ENCODE measurements at regions of chr6 and their contacts with region 1.

Region 1: GRCh38 chr6:89527634-89528033 is 94.7 kb downstream of the ANKRD6 start:
- DNase-seq: no peak
- ATAC-seq: peak; percentile 60
- H3K4me3 ChIP-seq: no peak overlapping the region
- H3K4me3 Mint-ChIP-seq: no peak overlapping the region
- H3K27ac ChIP-seq: no peak overlapping the region
- H3K27ac Mint-ChIP-seq: peak overlapping the region in 1 of 9 donors; percentile 24
- H3K4me1 ChIP-seq: no peaks in the 10 kb centered on the region
- H3K4me1 Mint-ChIP-seq: peaks cover 0 to 3% (median 0%) of the 10 kb centered on the region in 7 donors
- H3K27me3 ChIP-seq: no peaks in the 10 kb centered on the region
- H3K27me3 Mint-ChIP-seq: no peaks in the 10 kb centered on the region

Region 2: DNA sequence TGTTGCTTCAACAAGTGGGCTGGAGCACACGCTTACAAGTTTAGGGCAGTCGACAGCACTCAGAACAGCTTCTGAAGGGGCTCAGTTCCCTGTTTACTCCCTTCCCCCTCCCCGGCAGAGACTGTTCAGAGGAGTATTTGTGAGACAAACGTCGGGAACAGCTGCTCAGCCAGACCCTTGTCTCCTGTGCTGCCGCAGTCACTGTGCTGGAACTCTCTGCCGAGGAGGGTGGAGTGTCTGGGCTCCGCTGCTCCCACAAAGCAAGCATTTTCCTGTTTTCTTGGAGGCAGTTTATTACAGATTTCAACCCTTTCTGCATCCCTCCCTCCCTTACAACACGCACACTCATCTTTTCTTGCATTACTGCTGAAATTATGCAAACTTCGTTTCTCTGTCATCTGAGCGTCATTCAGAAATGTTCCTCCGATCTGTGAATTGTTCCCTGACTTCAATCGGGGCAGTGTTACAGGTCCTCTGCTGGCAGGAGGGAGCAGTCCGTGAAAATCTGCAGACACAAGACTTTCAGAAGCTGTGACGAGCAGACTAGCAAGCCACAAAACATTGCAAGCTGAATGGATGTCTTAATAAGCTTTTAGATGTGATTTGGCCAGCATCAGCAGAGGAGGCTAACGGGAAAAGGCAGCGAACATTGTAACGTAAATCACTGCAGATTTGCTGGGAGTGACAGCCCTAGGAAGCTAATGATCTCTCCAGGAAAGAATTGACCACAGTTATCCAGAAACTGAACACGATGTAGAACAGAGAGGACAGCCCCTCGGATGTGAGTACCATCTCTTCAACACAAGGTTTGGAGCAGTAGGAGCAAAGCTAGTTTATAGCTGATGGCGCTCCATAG is 34.7 kb after region 1 on chr6:
- CTCF ChIA-PET with region 1: no interaction called
- POLR2A ChIA-PET with region 1: no interaction called
- intact Hi-C with region 1: loop called in 1 of 2 experiments (anchors 1 kb)
- DNase-seq: no peak
- ATAC-seq: no peak
- H3K4me3 ChIP-seq: no peak overlapping the region
- H3K4me3 Mint-ChIP-seq: no peak overlapping the region
- H3K27ac ChIP-seq: no peak overlapping the region
- H3K27ac Mint-ChIP-seq: no peak overlapping the region
- H3K4me1 ChIP-seq: no peaks in the 10 kb centered on the region
- H3K4me1 Mint-ChIP-seq: no peaks in the 10 kb centered on the region
- H3K27me3 ChIP-seq: no peaks in the 10 kb centered on the region
- H3K27me3 Mint-ChIP-seq: peaks cover 0 to 30% (median 0%) of the 10 kb centered on the region in 5 donors

Region 3: DNA sequence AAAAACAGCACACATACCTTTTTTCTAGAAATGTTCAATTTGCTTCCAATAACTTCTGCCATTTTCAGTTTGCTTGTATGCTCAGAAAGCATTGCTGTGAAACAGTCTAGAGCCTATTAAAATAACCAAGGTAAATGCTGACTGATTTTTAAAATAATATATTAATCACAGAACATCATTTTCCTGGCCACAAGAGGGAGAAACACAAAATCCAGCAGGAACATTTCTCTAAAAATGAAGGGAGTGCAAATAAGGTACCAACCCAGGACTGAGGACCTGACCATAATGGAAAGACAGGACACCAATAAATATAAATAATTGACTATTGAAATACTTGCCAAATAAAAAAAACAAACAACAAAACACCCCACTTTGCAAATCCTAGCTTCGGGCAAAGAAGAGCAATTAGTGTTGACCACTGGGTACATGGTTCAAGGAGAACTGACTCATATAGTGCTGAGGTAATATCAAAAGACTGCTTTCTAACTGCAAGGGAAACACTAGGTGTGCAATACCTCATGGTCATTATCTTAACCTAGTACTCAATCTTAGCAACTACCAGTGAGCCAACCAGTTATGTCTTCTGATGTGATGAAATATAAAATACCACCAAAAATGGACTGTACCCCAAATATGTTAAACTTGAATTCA is 249.1 kb after region 1 on chr6:
- CTCF ChIA-PET with region 1: no interaction called
- POLR2A ChIA-PET with region 1: no interaction called
- intact Hi-C with region 1: no loop called
- DNase-seq: no peak
- ATAC-seq: no peak
- H3K4me3 ChIP-seq: no peak overlapping the region
- H3K4me3 Mint-ChIP-seq: no peak overlapping the region
- H3K27ac ChIP-seq: no peak overlapping the region
- H3K27ac Mint-ChIP-seq: no peak overlapping the region
- H3K4me1 ChIP-seq: no peaks in the 10 kb centered on the region
- H3K4me1 Mint-ChIP-seq: peaks cover 0 to 14% (median 0%) of the 10 kb centered on the region in 7 donors
- H3K27me3 ChIP-seq: no peaks in the 10 kb centered on the region
- H3K27me3 Mint-ChIP-seq: no peaks in the 10 kb centered on the region

Measured in naive thymus-derived CD4-positive, alpha-beta T cell (primary cell).